IMR-90 (cell line): ENCODE measurements at regions of chr2 and their contacts with region 1.

Region 1: GRCh38 chr2:6352906-6353515 is 512.7 kb downstream of the CMPK2 start:
- DNase-seq: peak; percentile 58
- ATAC-seq: peak; percentile 99
- H3K4me3 ChIP-seq: no peak overlapping the region
- H3K27ac ChIP-seq: no peak overlapping the region
- H3K4me1 ChIP-seq: no peaks in the 10 kb centered on the region
- H3K27me3 ChIP-seq: no peaks in the 10 kb centered on the region
- CTCF ChIP-seq: peak; percentile 80
- POLR2A ChIP-seq: 0 out of 2 replicates have a peak, but pooled peaks have one; percentile 20
- RAD21 ChIP-seq: peak; percentile 79

Region 2: GRCh38 chr2:6310256-6311215 is 42.5 kb before region 1 on chr2:
- CTCF ChIA-PET with region 1: no interaction called
- POLR2A ChIA-PET with region 1: no interaction called
- dilution Hi-C with region 1: no loop called
- in situ Hi-C with region 1: no loop called
- intact Hi-C with region 1: no loop called
- DNase-seq: no peak
- ATAC-seq: no peak
- H3K4me3 ChIP-seq: no peak overlapping the region
- H3K27ac ChIP-seq: no peak overlapping the region
- H3K4me1 ChIP-seq: no peaks in the 10 kb centered on the region
- H3K27me3 ChIP-seq: no peaks in the 10 kb centered on the region; the same call in 1 of the 2 replicates
- CTCF ChIP-seq: no peak
- POLR2A ChIP-seq: no peak
- RAD21 ChIP-seq: no peak

Region 3: DNA sequence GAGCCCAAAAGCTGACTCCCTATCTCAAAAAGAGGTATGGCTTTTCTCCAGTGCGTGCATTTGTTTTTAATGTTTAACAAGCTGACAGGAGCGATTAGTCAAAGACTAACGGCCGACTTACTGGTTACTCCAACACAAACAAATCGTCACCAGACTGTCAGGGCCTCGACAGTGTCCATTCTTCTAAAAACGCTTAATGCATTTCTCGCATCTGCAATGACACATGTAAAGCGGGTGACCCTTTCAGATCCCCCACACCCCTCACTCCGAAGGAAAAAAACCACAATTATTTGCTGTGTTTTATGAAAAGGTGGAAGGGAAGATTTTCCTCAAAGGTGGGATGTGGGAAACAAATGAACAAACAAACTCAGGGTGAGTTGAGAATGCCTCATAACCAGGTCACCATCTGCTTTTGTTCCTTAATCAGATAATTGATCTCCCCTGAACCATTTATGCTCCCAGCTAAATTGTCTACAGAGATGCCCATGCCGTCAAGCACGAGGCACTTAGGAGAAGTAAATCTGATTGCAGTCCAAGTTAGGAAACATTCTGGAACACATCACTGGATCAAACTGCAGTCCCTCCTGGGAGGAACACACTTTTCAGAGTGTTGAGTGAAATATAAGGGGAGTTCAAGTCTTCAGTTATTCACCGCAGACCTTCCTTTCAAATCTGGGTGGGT is 171.8 kb after region 1 on chr2:
- CTCF ChIA-PET with region 1: no interaction called
- POLR2A ChIA-PET with region 1: no interaction called
- dilution Hi-C with region 1: no loop called
- in situ Hi-C with region 1: no loop called
- intact Hi-C with region 1: loop called (anchors 5 kb)
- DNase-seq: peak; percentile 27
- ATAC-seq: peak; percentile 37
- H3K4me3 ChIP-seq: no peak overlapping the region
- H3K27ac ChIP-seq: no peak overlapping the region
- H3K4me1 ChIP-seq: peaks cover 2% of the 10 kb centered on the region; the same call in 1 of the 2 replicates
- H3K27me3 ChIP-seq: no peaks in the 10 kb centered on the region
- CTCF ChIP-seq: no peak
- POLR2A ChIP-seq: no peak
- RAD21 ChIP-seq: no peak

Region 4: DNA sequence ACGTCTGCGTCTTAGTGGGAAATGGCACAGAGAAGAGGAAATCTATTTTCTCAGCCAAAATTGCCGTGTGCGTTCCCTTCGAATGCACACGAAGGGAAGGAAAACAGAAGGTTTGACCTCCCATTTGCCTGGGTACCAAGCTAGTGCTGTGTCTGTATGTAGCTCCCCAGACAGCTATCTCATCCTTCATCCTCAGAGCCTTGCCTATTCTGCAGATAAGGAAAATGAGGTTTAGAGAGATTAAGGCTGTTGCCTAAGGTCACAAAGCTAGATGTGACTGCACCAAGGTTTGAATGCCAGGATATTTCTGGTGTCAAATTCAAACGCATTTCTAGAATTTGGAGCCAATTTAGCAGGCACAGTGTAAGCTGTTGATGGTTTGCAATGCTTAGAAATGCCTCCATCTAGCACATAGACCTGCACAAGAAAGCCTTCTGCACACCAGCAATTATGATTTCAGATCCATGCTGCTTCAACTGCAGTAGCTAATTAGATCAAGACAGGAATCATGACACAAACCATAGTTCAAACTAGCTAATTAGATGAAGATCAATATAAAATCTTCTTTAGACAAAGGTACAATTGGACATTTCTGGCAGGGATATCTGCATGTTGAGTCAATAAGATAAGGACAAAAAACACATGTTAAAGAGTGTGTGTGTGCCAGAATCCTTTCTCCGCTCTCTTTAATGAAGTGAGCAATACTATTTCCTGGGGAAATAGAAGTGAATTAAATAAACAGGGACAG is 397.6 kb after region 1 on chr2:
- CTCF ChIA-PET with region 1: interaction called, 4 read pairs
- POLR2A ChIA-PET with region 1: no interaction called
- dilution Hi-C with region 1: no loop called
- in situ Hi-C with region 1: no loop called
- intact Hi-C with region 1: loop called (anchors 5 kb)
- DNase-seq: no peak
- ATAC-seq: no peak
- H3K4me3 ChIP-seq: no peak overlapping the region
- H3K27ac ChIP-seq: no peak overlapping the region
- H3K4me1 ChIP-seq: no peaks in the 10 kb centered on the region
- H3K27me3 ChIP-seq: no peaks in the 10 kb centered on the region
- CTCF ChIP-seq: no peak
- POLR2A ChIP-seq: no peak
- RAD21 ChIP-seq: no peak

Region 5: DNA sequence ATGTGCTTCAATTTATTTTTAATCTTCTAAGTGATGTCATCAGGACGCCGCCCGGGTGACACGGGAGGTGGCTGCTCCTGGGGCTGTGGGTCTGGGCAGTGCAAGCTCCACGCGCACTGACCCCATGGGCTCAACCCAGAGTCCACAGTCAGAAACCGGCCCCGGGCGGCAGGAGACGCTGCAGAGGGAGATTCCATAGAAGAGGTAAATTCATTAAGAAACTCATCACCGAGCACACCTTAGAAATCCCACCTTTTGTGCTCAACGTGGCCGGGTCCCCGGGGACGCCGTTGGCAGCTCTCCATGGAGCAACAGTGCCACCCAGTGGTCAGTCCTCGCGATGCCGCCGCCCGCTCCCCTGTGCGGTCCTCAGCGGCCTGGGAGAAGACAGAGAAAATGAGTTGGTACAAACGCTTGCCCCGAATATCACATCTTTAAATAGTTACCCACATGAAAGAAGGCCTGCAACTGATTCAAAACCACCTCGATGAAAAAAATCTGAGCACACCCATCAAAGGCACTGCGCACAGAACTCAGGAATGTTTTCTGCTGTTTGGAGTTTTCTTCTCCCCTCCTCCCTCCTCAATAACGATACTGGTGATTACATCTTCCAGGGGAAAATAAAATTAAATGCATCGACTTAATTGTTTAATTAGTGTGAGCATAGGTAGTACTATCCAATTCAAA is 420.1 kb after region 1 on chr2:
- CTCF ChIA-PET with region 1: interaction called, 9 read pairs
- POLR2A ChIA-PET with region 1: no interaction called
- dilution Hi-C with region 1: no loop called
- in situ Hi-C with region 1: loop called (anchors 5 kb)
- intact Hi-C with region 1: loop called (anchors 1 kb)
- DNase-seq: peak; percentile 11
- ATAC-seq: peak; percentile 95
- H3K4me3 ChIP-seq: no peak overlapping the region
- H3K27ac ChIP-seq: no peak overlapping the region
- H3K4me1 ChIP-seq: no peaks in the 10 kb centered on the region
- H3K27me3 ChIP-seq: no peaks in the 10 kb centered on the region; the same call in 1 of the 2 replicates
- CTCF ChIP-seq: peak; percentile 93
- POLR2A ChIP-seq: 0 out of 2 replicates have a peak, but pooled peaks have one; percentile 25
- RAD21 ChIP-seq: peak; percentile 97

Region 6: GRCh38 chr2:6826081-6826913 is 473.3 kb after region 1 on chr2:
- CTCF ChIA-PET with region 1: no interaction called
- POLR2A ChIA-PET with region 1: no interaction called
- dilution Hi-C with region 1: no loop called
- in situ Hi-C with region 1: no loop called
- intact Hi-C with region 1: loop called (anchors 5 kb)
- DNase-seq: peak; percentile 87
- ATAC-seq: no peak
- H3K4me3 ChIP-seq: no peak overlapping the region
- H3K27ac ChIP-seq: no peak overlapping the region
- H3K4me1 ChIP-seq: peaks cover 11% of the 10 kb centered on the region
- H3K27me3 ChIP-seq: no peaks in the 10 kb centered on the region
- CTCF ChIP-seq: peak; percentile 36
- POLR2A ChIP-seq: no peak
- RAD21 ChIP-seq: peak; percentile 35; the same call in 1 of the 2 replicates